GM13976 (cell line): ENCODE measurements at regions of chr20 and their contacts with region 1.

Region 1: GRCh38 chr20:561437-562231 is 18.0 kb upstream of the CSNK2A1 start:
- DNase-seq: peak; percentile 82
- CTCF ChIP-seq: peak; percentile 84

Region 2: GRCh38 chr20:645318-646106 is 83.9 kb after region 1 on chr20:
- in situ Hi-C with region 1: loop called (anchors 5 kb)
- DNase-seq: peak; percentile 90
- CTCF ChIP-seq: peak; percentile 98

Region 3: DNA sequence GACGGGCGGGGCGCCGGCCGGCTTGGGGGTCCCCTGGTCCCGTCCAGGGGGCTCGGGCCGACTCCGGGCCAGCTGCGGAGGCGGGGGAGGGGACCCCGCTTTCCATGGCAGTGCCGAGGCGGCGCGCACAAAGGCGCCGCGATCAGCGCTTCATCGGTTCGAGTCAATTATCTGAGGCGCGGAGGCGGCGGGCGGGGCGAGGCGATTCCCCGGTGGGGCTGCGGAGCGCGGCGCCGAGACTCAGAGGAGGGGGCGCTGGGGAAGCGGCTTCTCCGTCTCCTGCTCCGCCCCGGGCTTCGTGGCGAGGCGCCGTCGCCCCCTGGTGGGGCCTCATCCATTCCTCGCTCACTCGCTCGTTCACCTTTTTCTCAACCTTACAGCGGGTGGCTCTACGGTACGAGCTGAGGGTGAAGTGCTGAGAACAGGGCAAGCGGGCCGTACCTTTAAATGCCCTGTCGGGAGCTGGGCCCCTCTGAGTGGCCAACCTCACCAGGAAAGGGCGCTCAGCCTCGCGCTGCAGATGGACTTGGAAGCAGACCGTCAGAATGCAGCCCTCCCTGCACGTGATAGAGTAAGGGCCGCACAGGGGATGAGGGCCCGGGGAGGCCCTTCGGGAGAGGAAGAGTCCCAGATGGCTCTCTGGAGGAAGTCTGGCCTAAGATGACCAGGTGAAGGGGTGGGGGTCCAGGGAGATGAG is 166.8 kb after region 1 on chr20:
- in situ Hi-C with region 1: loop called (anchors 25 kb)
- DNase-seq: peak; percentile 82
- CTCF ChIP-seq: peak; percentile 44